Dorsolateral prefrontal cortex (tissue), 120 donors: ENCODE measurements at regions of chr2 and their contacts with region 1.

Region 1: DNA sequence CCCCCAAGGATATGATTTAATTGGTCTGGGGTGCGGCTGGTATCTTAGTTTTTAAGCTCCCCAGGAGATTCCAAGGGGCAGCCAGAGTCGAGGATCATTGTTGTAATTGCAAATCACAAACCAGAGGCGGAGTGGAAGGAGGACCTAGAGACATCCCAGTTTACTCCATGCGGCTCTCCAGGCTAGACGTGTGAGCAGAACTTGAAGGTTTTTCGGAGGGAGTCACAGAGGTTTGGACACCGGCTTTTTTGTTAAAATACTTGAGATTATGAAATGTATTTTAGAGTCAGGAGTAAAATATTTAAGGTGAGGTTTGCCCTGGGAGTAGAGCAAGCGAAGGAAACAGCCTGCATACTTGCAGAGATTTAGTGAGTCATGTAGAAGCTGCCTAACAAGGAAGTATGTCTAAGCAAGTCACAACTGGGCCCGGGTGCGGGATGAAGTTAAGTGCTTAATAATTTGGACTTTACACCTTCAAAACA is 39.5 kb downstream of the TGOLN2 start:
- DNase-seq: no peak
- H3K4me3 ChIP-seq: no peak overlapping the region
- H3K27ac ChIP-seq: no peak overlapping the region
- H3K27me3 ChIP-seq: no peaks in the 10 kb centered on the region
- CTCF ChIP-seq: no peak

Region 2: GRCh38 chr2:85132834-85133637 is 155.2 kb before region 1 on chr2 and contains the start of gene TCF7L1:
- intact Hi-C with region 1: loop called in 1 of 2 experiments (anchors 10 kb)
- DNase-seq: peak; percentile 6 to 63 (median 39)
- H3K4me3 ChIP-seq: peak within 1 kb of the TSS; percentile 36 to 74 (median 64)
- H3K27ac ChIP-seq: peak within 1 kb of the TSS in 32 of 59 donors; percentile 2 to 79 (median 60)
- H3K27me3 ChIP-seq: peaks cover 0 to 44% (median 17%) of the 10 kb centered on the region in 45 donors
- CTCF ChIP-seq: peak; percentile 28 to 79 (median 64)
- total RNA-seq, gene TCF7L1: 2.1 to 12.7 (median 4.4) TPM

Region 3: GRCh38 chr2:85504778-85505323 is 216.6 kb after region 1 on chr2:
- intact Hi-C with region 1: no loop called
- DNase-seq: peak in 1 of 10 donors; percentile 41
- H3K4me3 ChIP-seq: no peak overlapping the region
- H3K27ac ChIP-seq: peak overlapping the region in 1 of 59 donors; percentile 9
- H3K27me3 ChIP-seq: no peaks in the 10 kb centered on the region
- CTCF ChIP-seq: no peak